BJ (cell line): ENCODE measurements at regions of chr3 and their contacts with region 1.

Region 1: GRCh38 chr3:108489771-108490170 is 20.6 kb downstream of the MYH15 start:
- DNase-seq: no peak
- H3K4me3 ChIP-seq: no peak overlapping the region
- H3K27me3 ChIP-seq: no peaks in the 10 kb centered on the region; the same call in 1 of the 2 replicates
- CTCF ChIP-seq: peak; percentile 67

Region 2: GRCh38 chr3:108552267-108553159 is 62.7 kb after region 1 on chr3:
- CTCF ChIA-PET with region 1: interaction called, 47 read pairs
- POLR2A ChIA-PET with region 1: no interaction called
- DNase-seq: no peak
- H3K4me3 ChIP-seq: no peak overlapping the region
- H3K27me3 ChIP-seq: no peaks in the 10 kb centered on the region
- CTCF ChIP-seq: peak; percentile 28

Region 3: GRCh38 chr3:108914774-108915641 is 425.2 kb after region 1 on chr3:
- CTCF ChIA-PET with region 1: interaction called, 12 read pairs
- POLR2A ChIA-PET with region 1: no interaction called
- DNase-seq: no peak
- H3K4me3 ChIP-seq: no peak overlapping the region
- H3K27me3 ChIP-seq: no peaks in the 10 kb centered on the region
- CTCF ChIP-seq: peak; percentile 85